ENCODE measurements at regions of chr12 and their contacts with region 1.

Region 1: DNA sequence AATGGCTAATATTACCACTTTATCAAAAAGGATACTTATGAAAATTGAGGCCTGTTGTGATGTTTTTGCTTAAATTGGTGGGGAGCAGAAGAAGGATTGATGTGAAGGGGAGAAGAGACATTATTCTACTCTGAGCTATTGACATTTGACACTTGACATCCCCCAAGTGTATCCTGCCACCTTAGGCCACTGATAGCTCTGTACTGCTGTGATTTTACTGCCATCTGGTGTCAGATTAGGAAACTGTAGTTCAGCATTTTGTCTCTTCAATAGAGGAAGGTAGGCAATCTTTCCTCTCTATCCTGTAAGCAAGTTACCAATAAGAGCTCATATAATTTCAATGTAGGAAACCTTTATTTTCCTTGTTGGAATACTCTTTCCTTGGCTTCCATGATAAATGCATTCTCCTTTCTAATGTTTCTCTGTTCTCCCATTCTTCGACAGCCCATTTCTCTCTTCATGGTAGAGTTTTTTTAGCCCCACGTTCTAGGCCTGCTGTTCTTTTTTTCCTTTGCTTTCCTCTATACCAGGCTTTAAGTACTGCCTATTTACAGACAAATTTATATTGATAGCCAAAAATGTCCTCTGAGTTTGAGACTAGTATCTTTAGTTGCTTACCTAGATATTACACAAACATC is 46.3 kb downstream of the PPHLN1 start:
- DNase-seq: peak; percentile 34 to 73
- ATAC-seq: peak; percentile 93 to 96
- H3K4me3 ChIP-seq: no peak overlapping the region
- H3K27ac ChIP-seq: no peak overlapping the region
- H3K4me1 ChIP-seq: no peaks in the 10 kb centered on the region
- CTCF ChIP-seq: peak; percentile 76
- EP300 ChIP-seq: no peak
- POLR2A ChIP-seq: no peak
- RAD21 ChIP-seq: peak; percentile 81 to 92

Region 2: GRCh38 chr12:42124764-42125723 is 247.2 kb before region 1 on chr12:
- CTCF ChIA-PET with region 1: interaction called, 14 read pairs
- POLR2A ChIA-PET with region 1: no interaction called
- DNase-seq: no peak
- ATAC-seq: peak; percentile 32 to 59; a peak in 4 of 6 replicates
- H3K4me3 ChIP-seq: no peak overlapping the region
- H3K27ac ChIP-seq: peak overlapping the region in 1 of 2 experiments; percentile 29; a peak in 2 of 6 replicates
- H3K4me1 ChIP-seq: peaks cover 55% of the 10 kb centered on the region
- CTCF ChIP-seq: no peak
- EP300 ChIP-seq: no peak
- POLR2A ChIP-seq: no peak
- RAD21 ChIP-seq: no peak

Region 3: GRCh38 chr12:42360747-42361403 is 11.4 kb before region 1 on chr12:
- CTCF ChIA-PET with region 1: interaction called, 11 read pairs
- POLR2A ChIA-PET with region 1: no interaction called
- DNase-seq: no peak
- ATAC-seq: no peak
- H3K4me3 ChIP-seq: no peak overlapping the region
- H3K27ac ChIP-seq: no peak overlapping the region
- H3K4me1 ChIP-seq: no peaks in the 10 kb centered on the region
- CTCF ChIP-seq: no peak
- EP300 ChIP-seq: no peak
- POLR2A ChIP-seq: no peak
- RAD21 ChIP-seq: no peak

Region 4: DNA sequence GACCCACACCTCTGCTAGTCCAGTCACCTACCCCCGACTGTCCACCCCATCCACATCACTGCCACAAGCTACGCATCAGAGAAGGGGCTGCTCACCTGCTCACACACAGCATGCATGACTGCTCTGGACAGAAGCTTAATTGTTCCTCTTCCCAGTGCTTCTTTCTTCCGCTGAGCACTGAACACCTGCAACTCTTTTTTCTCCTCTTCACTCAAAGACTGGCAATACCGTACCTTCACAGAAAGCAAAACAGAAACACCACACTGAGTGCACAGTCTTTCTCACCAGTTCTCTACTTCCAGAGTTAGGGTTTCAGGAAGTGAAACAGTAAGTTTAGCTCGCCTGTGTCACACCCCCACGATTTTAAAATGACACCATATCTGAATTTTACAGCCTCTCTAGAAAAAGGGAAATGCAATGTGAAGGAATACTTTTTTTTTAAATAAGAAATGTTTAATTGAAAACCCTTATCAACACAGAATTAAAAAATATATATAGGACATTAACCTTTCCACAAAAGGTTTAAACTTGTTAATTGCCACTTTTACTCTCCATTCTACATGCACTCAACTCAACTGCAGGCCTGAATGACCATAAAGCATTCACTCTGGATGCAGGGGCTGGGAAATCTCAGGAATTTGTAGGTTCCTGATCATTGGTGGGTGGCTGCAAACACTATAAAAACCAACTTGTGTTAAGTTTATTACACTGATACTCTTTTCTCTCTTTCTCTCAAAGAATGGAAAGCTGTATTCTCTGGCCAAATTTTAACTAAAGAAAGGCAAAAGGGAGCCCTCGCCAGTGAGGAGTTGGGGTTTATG is 97.3 kb after region 1 on chr12:
- CTCF ChIA-PET with region 1: no interaction called
- POLR2A ChIA-PET with region 1: no interaction called
- DNase-seq: no peak
- ATAC-seq: 0 out of 6 replicates have a peak, but pooled peaks of 1 of the 2 experiments have one; percentile 29
- H3K4me3 ChIP-seq: no peak overlapping the region
- H3K27ac ChIP-seq: no peak overlapping the region
- H3K4me1 ChIP-seq: peaks cover 10% of the 10 kb centered on the region; the same call in 2 of the 3 replicates
- CTCF ChIP-seq: no peak
- EP300 ChIP-seq: no peak
- POLR2A ChIP-seq: no peak
- RAD21 ChIP-seq: no peak

Measured in A549 (cell line).